ENCODE measurements at regions of chr20 and their contacts with region 1.

Region 1: GRCh38 chr20:45373353-45374100 is 4.6 kb downstream of the TP53TG5 start:
- DNase-seq: peak; percentile 91
- ATAC-seq: peak; percentile 90
- H3K4me3 Mint-ChIP-seq: peak overlapping the region; percentile 73
- H3K27ac Mint-ChIP-seq: peak overlapping the region; percentile 87
- H3K4me1 Mint-ChIP-seq: peaks cover 38% of the 10 kb centered on the region
- H3K27me3 Mint-ChIP-seq: no peaks in the 10 kb centered on the region

Region 2: GRCh38 chr20:45322952-45323383 is 50.6 kb before region 1 on chr20:
- CTCF ChIA-PET with region 1: interaction called, 52 read pairs
- POLR2A ChIA-PET with region 1: interaction called, 3 read pairs
- DNase-seq: no peak
- ATAC-seq: no peak
- H3K4me3 Mint-ChIP-seq: no peak overlapping the region
- H3K27ac Mint-ChIP-seq: no peak overlapping the region
- H3K4me1 Mint-ChIP-seq: peaks cover 40% of the 10 kb centered on the region
- H3K27me3 Mint-ChIP-seq: no peaks in the 10 kb centered on the region

Region 3: DNA sequence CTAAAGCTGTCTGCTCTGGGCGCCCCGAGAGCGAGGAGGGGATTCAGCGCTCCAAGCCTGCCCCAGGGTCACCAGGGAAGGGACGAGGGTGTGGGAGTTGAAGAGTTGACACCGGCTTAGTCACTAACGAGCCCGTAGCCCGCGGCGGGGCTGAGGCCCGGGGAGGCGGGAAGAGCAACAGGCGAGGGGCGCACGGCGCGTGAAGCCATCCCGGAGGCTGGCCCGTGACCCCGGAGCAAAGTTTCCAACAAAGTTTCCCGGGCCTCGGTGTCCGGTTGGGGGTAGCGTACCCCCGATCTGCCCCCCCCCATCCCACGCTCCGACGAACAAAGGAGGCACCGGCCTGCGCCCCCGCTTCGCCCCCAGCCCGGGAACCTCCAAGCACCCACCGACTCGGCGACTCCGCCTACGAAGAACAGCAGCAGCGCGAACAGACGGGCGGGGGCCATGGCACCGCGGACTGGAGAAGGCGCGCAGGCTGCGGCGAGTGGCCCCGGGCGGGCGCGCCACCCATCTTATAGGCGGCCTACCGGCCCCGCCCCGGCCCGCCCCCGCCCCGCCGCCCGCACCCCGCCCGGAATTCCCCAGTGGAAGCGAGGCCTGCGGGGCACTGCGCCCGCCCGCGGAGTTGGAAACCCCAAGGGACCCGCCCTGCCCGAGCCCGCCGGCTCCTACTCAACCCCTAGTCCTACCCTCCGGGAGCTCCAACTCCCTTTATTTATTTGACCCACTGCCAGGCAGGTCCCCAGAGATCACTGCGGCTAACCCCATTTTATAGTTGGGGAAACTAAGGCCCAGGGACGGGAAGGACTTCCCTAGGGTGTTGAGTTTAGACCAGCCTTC is 25.4 kb before region 1 on chr20 and contains the start of gene SDC4:
- CTCF ChIA-PET with region 1: interaction called, 36 read pairs
- POLR2A ChIA-PET with region 1: no interaction called
- DNase-seq: peak; percentile 55
- ATAC-seq: peak; percentile 89
- H3K4me3 Mint-ChIP-seq: peak within 1 kb of the TSS; percentile 78
- H3K27ac Mint-ChIP-seq: peak within 1 kb of the TSS; percentile 63
- H3K4me1 Mint-ChIP-seq: peaks cover 37% of the 10 kb centered on the region
- H3K27me3 Mint-ChIP-seq: peaks cover 2% of the 10 kb centered on the region
- total RNA-seq, gene SDC4: 6.6 to 6.7 TPM

Region 4: DNA sequence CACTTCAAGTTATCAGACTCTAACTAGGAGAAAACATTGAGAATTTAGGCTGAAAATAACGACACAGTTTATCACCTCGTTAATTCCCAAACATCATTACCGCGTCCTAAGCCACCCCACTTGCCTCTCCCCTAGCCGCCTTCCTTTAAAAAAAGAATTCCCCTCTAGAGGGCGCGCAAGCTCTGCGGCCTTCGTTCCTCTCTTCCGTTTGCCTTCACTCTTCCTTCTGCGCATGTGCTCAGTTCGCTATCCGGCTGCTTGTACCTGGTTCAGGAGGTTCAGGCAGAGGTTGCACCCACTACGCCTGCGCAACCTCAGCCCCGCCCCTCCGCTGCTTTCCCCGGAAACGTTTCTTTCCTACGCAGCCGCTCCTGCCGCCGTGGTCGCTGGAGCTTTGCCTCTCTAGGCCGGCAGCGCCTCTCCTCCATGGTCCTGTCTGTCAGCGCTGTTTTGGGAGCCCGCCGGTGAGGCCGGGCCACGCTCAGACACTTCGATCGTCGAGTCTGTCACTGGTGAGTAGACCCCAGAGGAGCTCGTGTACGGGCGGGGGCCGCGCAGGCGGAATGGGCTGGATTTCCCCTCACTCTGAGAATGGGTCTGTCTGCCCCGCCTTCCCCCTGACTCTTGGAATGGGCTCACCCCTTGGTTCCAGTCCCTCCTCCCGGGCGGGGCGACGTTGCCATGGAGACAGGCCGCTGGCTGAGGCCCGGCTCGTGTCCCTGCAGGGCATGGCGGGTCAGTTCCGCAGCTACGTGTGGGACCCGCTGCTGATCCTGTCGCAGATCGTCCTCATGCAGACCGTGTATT is 10.5 kb before region 1 on chr20 and contains the start of gene SYS1:
- CTCF ChIA-PET with region 1: interaction called, 167 read pairs
- POLR2A ChIA-PET with region 1: interaction called, 31 read pairs
- DNase-seq: peak; percentile 99
- ATAC-seq: peak; percentile 91
- H3K4me3 Mint-ChIP-seq: peak within 1 kb of the TSS; percentile 97
- H3K27ac Mint-ChIP-seq: peak within 1 kb of the TSS; percentile 93
- H3K4me1 Mint-ChIP-seq: peaks cover 61% of the 10 kb centered on the region
- H3K27me3 Mint-ChIP-seq: no peaks in the 10 kb centered on the region
- total RNA-seq, gene SYS1: 28.0 to 30.8 TPM

Region 5: DNA sequence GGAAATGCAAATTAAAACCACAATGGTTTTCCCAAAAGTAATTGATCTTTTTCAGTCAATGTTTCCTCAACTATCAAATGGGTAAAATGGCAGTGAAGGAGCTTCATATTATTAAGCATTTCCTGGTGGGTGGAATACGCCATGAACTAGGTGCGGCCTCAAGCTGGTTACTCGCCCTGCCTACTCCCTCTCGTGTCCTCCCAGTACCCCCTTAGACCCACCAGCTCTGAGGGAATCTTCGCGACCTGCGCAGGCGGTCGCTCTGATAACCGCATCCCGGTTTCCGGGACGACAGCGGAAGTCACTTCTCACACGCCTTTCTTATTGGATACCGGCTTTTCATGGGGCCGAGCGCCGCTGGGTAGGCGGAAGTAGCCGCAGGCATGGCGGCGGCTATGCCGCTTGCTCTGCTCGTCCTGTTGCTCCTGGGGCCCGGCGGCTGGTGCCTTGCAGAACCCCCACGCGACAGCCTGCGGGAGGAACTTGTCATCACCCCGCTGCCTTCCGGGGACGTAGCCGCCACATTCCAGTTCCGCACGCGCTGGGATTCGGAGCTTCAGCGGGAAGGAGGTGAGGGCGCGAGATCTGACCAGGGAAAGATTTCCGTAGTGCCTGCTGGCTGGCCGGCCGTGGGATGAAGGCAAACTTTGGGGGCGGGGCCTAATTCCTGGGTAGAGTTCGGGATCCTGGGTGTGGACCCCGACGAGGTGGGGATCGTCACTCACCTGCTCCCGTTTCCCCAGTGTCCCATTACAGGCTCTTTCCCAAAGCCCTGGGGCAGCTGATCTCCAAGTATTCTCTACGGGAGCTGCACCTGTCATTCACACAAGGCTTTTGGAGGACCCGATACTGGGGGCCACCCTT is 42.5 kb after region 1 on chr20 and contains the start of gene PIGT:
- CTCF ChIA-PET with region 1: interaction called, 40 read pairs
- POLR2A ChIA-PET with region 1: interaction called, 15 read pairs
- DNase-seq: peak; percentile 92
- ATAC-seq: peak; percentile 97
- H3K4me3 Mint-ChIP-seq: peak within 1 kb of the TSS; percentile 93
- H3K27ac Mint-ChIP-seq: peak within 1 kb of the TSS; percentile 90
- H3K4me1 Mint-ChIP-seq: peaks cover 42% of the 10 kb centered on the region
- H3K27me3 Mint-ChIP-seq: peaks cover 2% of the 10 kb centered on the region
- total RNA-seq, gene PIGT: 59.6 to 62.4 TPM

Region 6: GRCh38 chr20:45771182-45771759 is 397.7 kb after region 1 on chr20:
- CTCF ChIA-PET with region 1: interaction called, 16 read pairs
- POLR2A ChIA-PET with region 1: no interaction called
- DNase-seq: peak; percentile 85
- ATAC-seq: peak; percentile 78
- H3K4me3 Mint-ChIP-seq: no peak overlapping the region
- H3K27ac Mint-ChIP-seq: no peak overlapping the region
- H3K4me1 Mint-ChIP-seq: peaks cover 5% of the 10 kb centered on the region
- H3K27me3 Mint-ChIP-seq: peaks cover 11% of the 10 kb centered on the region